ENCODE measurements at regions of chr18 and their contacts with region 1.

Region 1: GRCh38 chr18:24368749-24369148 is 28.9 kb downstream of the OSBPL1A start:
- DNase-seq: peak in 3 of 9 donors; percentile 1 to 57 (median 2)
- ATAC-seq: peak; percentile 20
- H3K4me3 ChIP-seq: no peak overlapping the region
- H3K4me3 Mint-ChIP-seq: peak overlapping the region in 3 of 10 donors; percentile 15 to 55 (median 32)
- H3K27ac ChIP-seq: no peak overlapping the region
- H3K27ac Mint-ChIP-seq: peak overlapping the region in 8 of 9 donors; percentile 21 to 79 (median 49)
- H3K4me1 ChIP-seq: peaks cover 0 to 8% of the 10 kb centered on the region in 2 donors
- H3K4me1 Mint-ChIP-seq: peaks cover 4 to 24% (median 15%) of the 10 kb centered on the region in 7 donors
- H3K27me3 ChIP-seq: no peaks in the 10 kb centered on the region
- H3K27me3 Mint-ChIP-seq: peaks cover 0 to 4% (median 0%) of the 10 kb centered on the region in 5 donors

Region 2: DNA sequence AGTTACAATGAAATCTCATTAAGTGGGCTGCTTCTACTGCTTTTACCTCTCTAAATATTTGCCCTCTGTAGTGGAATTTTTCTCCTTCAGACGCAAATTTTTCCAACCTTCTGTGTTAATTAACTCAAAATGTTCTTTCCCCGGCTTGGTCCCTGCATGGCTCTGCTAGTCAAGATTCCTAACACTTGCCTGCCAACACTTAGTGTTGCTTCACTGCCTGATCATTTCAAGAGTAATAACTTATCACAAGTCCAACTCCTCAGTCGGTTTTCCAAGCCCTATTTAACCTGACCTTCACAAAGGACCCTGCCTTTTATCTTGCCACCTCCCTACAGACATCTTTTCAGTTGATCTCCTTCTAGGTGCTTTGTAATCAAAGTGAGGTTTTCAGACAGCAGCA is 234.4 kb after region 1 on chr18:
- CTCF ChIA-PET with region 1: no interaction called
- POLR2A ChIA-PET with region 1: no interaction called
- intact Hi-C with region 1: no loop called
- DNase-seq: no peak
- ATAC-seq: no peak
- H3K4me3 ChIP-seq: no peak overlapping the region
- H3K4me3 Mint-ChIP-seq: no peak overlapping the region
- H3K27ac ChIP-seq: no peak overlapping the region
- H3K27ac Mint-ChIP-seq: no peak overlapping the region
- H3K4me1 ChIP-seq: no peaks in the 10 kb centered on the region
- H3K4me1 Mint-ChIP-seq: no peaks in the 10 kb centered on the region
- H3K27me3 ChIP-seq: no peaks in the 10 kb centered on the region
- H3K27me3 Mint-ChIP-seq: peaks cover 10 to 22% (median 12%) of the 10 kb centered on the region in 5 donors

Region 3: GRCh38 chr18:25896178-25896780 is 1527.5 kb after region 1 on chr18:
- CTCF ChIA-PET with region 1: no interaction called
- POLR2A ChIA-PET with region 1: no interaction called
- intact Hi-C with region 1: loop called in 1 of 2 experiments (anchors 10 kb)
- DNase-seq: peak in 3 of 9 donors; percentile 2 to 8 (median 4)
- ATAC-seq: peak; percentile 48
- H3K4me3 ChIP-seq: no peak overlapping the region
- H3K4me3 Mint-ChIP-seq: no peak overlapping the region
- H3K27ac ChIP-seq: no peak overlapping the region
- H3K27ac Mint-ChIP-seq: no peak overlapping the region
- H3K4me1 ChIP-seq: no peaks in the 10 kb centered on the region
- H3K4me1 Mint-ChIP-seq: peaks cover 0 to 4% (median 0%) of the 10 kb centered on the region in 7 donors
- H3K27me3 ChIP-seq: peaks cover 0 to 3% of the 10 kb centered on the region in 2 donors
- H3K27me3 Mint-ChIP-seq: peaks cover 1 to 18% (median 13%) of the 10 kb centered on the region in 5 donors

Region 4: DNA sequence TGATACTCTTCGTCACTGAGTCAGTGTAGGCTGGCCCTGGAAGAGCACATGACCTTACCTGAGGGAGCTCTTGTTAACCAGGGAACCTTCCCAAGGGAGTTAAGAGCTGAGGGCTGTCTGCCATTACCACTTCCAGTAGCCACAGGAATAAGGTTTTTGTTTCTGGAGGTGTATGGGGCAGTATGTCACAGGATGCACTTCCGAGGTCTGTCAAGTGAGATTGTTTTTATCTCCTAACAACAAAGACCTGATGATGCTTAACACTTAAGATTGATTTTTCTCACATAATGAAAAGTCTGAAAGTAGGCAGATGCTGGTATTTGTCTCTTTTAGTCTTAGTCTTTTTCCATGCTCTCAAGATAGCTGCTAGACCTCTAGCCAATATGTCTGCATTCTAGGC is 1806.7 kb after region 1 on chr18:
- CTCF ChIA-PET with region 1: no interaction called
- POLR2A ChIA-PET with region 1: no interaction called
- intact Hi-C with region 1: no loop called
- DNase-seq: peak in 4 of 9 donors; percentile 23 to 35 (median 28)
- ATAC-seq: peak; percentile 58
- H3K4me3 ChIP-seq: no peak overlapping the region
- H3K4me3 Mint-ChIP-seq: peak overlapping the region in 3 of 10 donors; percentile 4 to 49 (median 6)
- H3K27ac ChIP-seq: no peak overlapping the region
- H3K27ac Mint-ChIP-seq: peak overlapping the region in 7 of 9 donors; percentile 11 to 86 (median 44)
- H3K4me1 ChIP-seq: no peaks in the 10 kb centered on the region
- H3K4me1 Mint-ChIP-seq: peaks cover 8 to 15% (median 11%) of the 10 kb centered on the region in 7 donors
- H3K27me3 ChIP-seq: no peaks in the 10 kb centered on the region
- H3K27me3 Mint-ChIP-seq: no peaks in the 10 kb centered on the region